Caco-2 (cell line): ENCODE measurements at regions of chr9 and their contacts with region 1.

Region 1: DNA sequence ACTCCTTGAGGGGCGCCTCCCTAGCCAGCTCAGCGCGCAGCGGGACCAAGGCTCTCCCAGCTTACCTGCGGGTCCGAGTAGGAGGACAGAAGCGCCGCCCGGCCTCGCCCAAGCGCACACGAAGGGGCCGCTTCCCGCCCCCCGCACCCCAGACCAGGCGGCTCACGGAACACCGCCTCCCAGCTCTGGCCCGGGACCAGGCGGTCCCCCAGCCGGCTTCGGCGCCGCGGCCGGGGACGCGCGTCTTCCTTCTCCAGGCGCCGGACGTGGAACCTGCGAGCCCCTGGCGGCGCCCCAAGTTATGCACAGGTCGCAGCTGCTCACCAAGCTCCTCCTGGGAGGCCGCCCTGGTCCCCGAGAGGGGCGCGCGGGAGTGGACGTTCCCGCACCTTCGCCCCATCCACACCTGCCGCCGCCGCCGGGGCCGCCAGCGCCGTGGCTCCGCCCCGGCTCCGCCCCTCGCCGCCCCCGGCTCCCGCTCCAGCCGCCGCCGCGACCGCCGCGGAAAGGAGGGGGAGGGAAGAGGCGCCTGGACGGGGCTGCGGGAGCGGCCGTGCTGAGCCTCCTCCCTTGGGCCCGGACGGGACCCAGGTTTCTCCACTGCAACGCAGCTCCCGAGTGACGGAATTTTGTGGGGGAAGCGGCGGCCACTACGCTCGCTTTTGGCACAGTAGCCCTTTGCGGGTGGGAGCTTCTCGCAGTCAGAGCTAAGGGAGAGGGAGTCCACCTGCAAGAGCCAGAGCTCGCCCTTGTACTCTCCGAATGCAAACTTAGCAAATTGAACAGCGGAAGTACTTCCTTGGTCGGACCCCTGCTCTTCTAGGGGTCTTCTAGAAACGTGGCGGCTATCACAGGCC is 77.5 kb upstream of the IFNE start:
- DNase-seq: peak; percentile 84 to 89
- H3K4me3 ChIP-seq: peak overlapping the region; percentile 88
- H3K4me3 Mint-ChIP-seq: peak overlapping the region; percentile 84
- H3K27ac Mint-ChIP-seq: peak overlapping the region; percentile 76
- H3K4me1 ChIP-seq: no peaks in the 10 kb centered on the region; the same call in none of the 2 replicates
- H3K4me1 Mint-ChIP-seq: no peaks in the 10 kb centered on the region
- H3K27me3 ChIP-seq: no peaks in the 10 kb centered on the region
- H3K27me3 Mint-ChIP-seq: no peaks in the 10 kb centered on the region
- CTCF ChIP-seq: peak in 1 of 2 experiments; percentile 43

Region 2: DNA sequence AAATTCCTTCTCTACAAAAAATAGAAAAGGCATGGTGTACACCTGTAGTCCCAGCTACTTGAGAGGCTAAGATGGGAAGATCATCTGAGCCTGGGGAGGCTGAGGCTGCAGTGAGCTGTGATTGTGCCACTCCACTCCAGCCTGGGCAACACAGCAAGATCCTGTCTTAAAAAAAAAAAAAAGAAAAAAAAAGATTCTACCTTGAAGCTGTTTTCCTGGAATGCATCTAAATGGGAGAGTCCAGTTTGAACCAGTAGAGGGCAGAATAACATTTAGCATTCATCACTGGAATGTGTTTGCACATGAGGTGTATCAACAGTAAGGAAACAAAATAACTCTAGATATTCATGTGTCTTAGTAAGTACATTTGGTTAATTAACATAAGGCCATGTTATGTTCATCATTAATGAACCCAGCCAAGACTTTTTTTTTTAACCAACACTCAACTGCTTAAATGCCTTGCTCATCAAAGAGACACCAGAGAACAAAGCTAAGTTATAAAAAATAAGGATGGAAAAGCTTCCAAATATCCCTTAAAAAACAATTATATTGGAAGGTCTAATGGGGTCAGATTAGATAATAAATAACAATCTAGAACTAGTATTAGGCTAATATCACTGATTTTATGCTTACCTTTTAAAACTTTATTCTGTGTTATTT is 93.7 kb before region 1 on chr9:
- CTCF ChIA-PET with region 1: interaction called, 4 read pairs
- POLR2A ChIA-PET with region 1: no interaction called
- intact Hi-C with region 1: loop called (anchors 2 kb)
- DNase-seq: peak in 1 of 2 experiments; percentile 56
- H3K4me3 ChIP-seq: no peak overlapping the region
- H3K4me3 Mint-ChIP-seq: no peak overlapping the region
- H3K27ac Mint-ChIP-seq: no peak overlapping the region
- H3K4me1 ChIP-seq: no peaks in the 10 kb centered on the region
- H3K4me1 Mint-ChIP-seq: no peaks in the 10 kb centered on the region
- H3K27me3 ChIP-seq: no peaks in the 10 kb centered on the region
- H3K27me3 Mint-ChIP-seq: no peaks in the 10 kb centered on the region
- CTCF ChIP-seq: peak; percentile 49 to 54

Region 3: GRCh38 chr9:21506626-21507484 is 52.8 kb before region 1 on chr9:
- CTCF ChIA-PET with region 1: no interaction called
- POLR2A ChIA-PET with region 1: no interaction called
- intact Hi-C with region 1: loop called (anchors 2 kb)
- DNase-seq: peak; percentile 35 to 39
- H3K4me3 ChIP-seq: no peak overlapping the region
- H3K4me3 Mint-ChIP-seq: peak overlapping the region; percentile 44
- H3K27ac Mint-ChIP-seq: no peak overlapping the region
- H3K4me1 ChIP-seq: peaks cover 50% of the 10 kb centered on the region
- H3K4me1 Mint-ChIP-seq: peaks cover 25% of the 10 kb centered on the region
- H3K27me3 ChIP-seq: no peaks in the 10 kb centered on the region
- H3K27me3 Mint-ChIP-seq: no peaks in the 10 kb centered on the region
- CTCF ChIP-seq: no peak

Region 4: GRCh38 chr9:21576331-21577189 is 16.9 kb after region 1 on chr9:
- CTCF ChIA-PET with region 1: interaction called, 3 read pairs
- POLR2A ChIA-PET with region 1: interaction called, 13 read pairs
- intact Hi-C with region 1: loop called (anchors 1 kb)
- DNase-seq: peak in 1 of 2 experiments; percentile 34
- H3K4me3 ChIP-seq: no peak overlapping the region
- H3K4me3 Mint-ChIP-seq: peak overlapping the region; percentile 69
- H3K27ac Mint-ChIP-seq: peak overlapping the region; percentile 93
- H3K4me1 ChIP-seq: peaks cover 33% of the 10 kb centered on the region
- H3K4me1 Mint-ChIP-seq: peaks cover 16% of the 10 kb centered on the region
- H3K27me3 ChIP-seq: no peaks in the 10 kb centered on the region
- H3K27me3 Mint-ChIP-seq: no peaks in the 10 kb centered on the region
- CTCF ChIP-seq: no peak

Region 5: GRCh38 chr9:21744841-21745240 is 185.2 kb after region 1 on chr9:
- CTCF ChIA-PET with region 1: no interaction called
- POLR2A ChIA-PET with region 1: no interaction called
- intact Hi-C with region 1: no loop called
- DNase-seq: no peak
- H3K4me3 ChIP-seq: no peak overlapping the region
- H3K4me3 Mint-ChIP-seq: no peak overlapping the region
- H3K27ac Mint-ChIP-seq: no peak overlapping the region
- H3K4me1 ChIP-seq: no peaks in the 10 kb centered on the region
- H3K4me1 Mint-ChIP-seq: no peaks in the 10 kb centered on the region
- H3K27me3 ChIP-seq: no peaks in the 10 kb centered on the region
- H3K27me3 Mint-ChIP-seq: no peaks in the 10 kb centered on the region
- CTCF ChIP-seq: no peak

Region 6: DNA sequence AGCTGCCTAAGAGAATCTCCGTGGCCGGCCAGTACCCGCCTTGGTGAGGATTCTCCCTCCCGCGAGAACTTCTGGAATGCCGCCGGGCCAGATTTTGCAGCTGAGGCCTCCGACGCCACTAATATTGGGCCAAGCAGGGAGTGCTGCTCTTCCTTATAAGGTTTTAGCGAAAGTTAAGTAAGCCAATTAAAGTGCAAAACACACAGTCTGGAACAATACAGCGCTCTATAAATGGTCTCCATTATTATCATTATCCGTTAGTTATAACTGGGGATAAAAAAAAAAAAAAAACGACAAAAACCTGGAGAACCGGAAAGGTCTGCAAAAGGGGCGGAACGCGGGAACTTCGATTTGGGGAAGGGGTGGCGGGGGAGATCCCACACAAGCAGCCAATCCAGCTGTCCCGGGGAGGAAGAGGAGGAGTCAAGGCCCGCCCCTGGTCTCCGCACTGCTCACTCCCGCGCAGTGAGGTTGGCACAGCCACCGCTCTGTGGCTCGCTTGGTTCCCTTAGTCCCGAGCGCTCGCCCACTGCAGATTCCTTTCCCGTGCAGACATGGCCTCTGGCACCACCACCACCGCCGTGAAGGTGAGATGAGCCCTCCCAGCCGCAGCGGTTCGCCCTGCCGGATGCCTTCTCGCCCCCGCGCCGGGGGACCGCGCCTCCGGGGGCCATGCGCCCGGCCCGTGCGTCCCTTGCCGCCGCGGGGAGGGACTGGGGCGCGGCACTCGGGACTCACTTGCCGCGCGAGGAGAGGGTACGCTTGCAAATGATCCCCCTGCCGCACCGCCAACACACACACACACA is 242.7 kb after region 1 on chr9 and contains the start of gene MTAP:
- CTCF ChIA-PET with region 1: no interaction called
- POLR2A ChIA-PET with region 1: no interaction called
- intact Hi-C with region 1: loop called (anchors 5 kb)
- DNase-seq: peak; percentile 88 to 94
- H3K4me3 ChIP-seq: peak within 1 kb of the TSS; percentile 79
- H3K4me3 Mint-ChIP-seq: peak within 1 kb of the TSS; percentile 99
- H3K27ac Mint-ChIP-seq: peak within 1 kb of the TSS; percentile 92
- H3K4me1 ChIP-seq: peaks cover 5% of the 10 kb centered on the region; the same call in 1 of the 2 replicates
- H3K4me1 Mint-ChIP-seq: no peaks in the 10 kb centered on the region
- H3K27me3 ChIP-seq: no peaks in the 10 kb centered on the region
- H3K27me3 Mint-ChIP-seq: no peaks in the 10 kb centered on the region
- CTCF ChIP-seq: no peak
- total RNA-seq, gene MTAP: 42.5 and 53.3 TPM in 2 replicates